Caco-2 (cell line): ENCODE measurements at regions of chr11 and their contacts with region 1.

Region 1: GRCh38 chr11:118051611-118052461 is 25.0 kb upstream of the TMPRSS4 start:
- DNase-seq: peak in 1 of 2 experiments; percentile 31
- H3K4me3 ChIP-seq: no peak overlapping the region
- H3K4me3 Mint-ChIP-seq: no peak overlapping the region
- H3K27ac Mint-ChIP-seq: no peak overlapping the region
- H3K4me1 ChIP-seq: no peaks in the 10 kb centered on the region
- H3K4me1 Mint-ChIP-seq: no peaks in the 10 kb centered on the region
- H3K27me3 ChIP-seq: no peaks in the 10 kb centered on the region
- H3K27me3 Mint-ChIP-seq: no peaks in the 10 kb centered on the region
- CTCF ChIP-seq: no peak

Region 2: GRCh38 chr11:117807482-117808327 is 244.1 kb before region 1 on chr11:
- CTCF ChIA-PET with region 1: interaction called, 15 read pairs
- POLR2A ChIA-PET with region 1: no interaction called
- intact Hi-C with region 1: no loop called
- DNase-seq: peak; percentile 76 to 85
- H3K4me3 ChIP-seq: no peak overlapping the region
- H3K4me3 Mint-ChIP-seq: no peak overlapping the region
- H3K27ac Mint-ChIP-seq: no peak overlapping the region
- H3K4me1 ChIP-seq: no peaks in the 10 kb centered on the region
- H3K4me1 Mint-ChIP-seq: no peaks in the 10 kb centered on the region
- H3K27me3 ChIP-seq: no peaks in the 10 kb centered on the region
- H3K27me3 Mint-ChIP-seq: peaks cover 15% of the 10 kb centered on the region
- CTCF ChIP-seq: peak; percentile 97 to 98

Region 3: DNA sequence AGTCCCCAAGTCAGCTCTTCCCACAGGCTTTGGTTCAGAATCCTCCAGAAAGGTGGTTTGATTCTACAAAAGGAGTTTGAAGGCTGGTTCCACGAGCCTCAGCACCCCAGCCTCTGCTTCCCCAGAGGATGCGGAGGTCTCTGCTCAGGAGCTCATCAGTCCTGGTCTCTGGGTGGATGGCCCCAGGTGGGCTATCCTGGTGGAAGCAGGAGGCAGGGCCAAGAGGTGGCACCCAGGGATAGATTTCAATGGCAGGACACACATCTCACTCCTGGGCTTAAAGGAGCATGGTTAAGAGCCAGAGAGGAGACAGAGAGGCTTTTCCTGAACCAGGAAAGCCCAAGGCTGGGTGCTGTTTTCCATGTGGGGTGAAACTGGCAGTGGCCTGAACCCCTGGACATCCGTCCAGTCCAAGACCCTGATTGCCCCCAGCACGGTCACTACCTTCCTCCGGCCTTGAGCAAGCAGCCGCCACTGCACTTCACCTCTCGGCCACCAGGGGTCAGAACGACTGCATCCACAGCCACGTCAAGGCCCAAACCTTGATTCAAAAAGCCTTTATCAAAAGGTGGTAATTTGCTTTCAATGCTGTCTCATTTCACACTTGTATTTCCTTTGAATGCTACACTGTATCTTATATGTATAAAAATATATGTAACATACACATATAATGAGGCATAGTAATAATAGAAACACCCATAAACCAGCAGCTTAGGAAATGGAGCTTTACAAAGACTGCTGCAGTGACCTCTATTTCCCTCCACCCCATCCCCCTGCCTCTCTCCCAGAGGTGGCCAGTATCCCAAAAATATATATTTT is 208.0 kb before region 1 on chr11:
- CTCF ChIA-PET with region 1: interaction called, 3 read pairs
- POLR2A ChIA-PET with region 1: no interaction called
- intact Hi-C with region 1: loop called (anchors 1 kb)
- DNase-seq: peak; percentile 81 to 89
- H3K4me3 ChIP-seq: no peak overlapping the region
- H3K4me3 Mint-ChIP-seq: no peak overlapping the region
- H3K27ac Mint-ChIP-seq: no peak overlapping the region
- H3K4me1 ChIP-seq: no peaks in the 10 kb centered on the region
- H3K4me1 Mint-ChIP-seq: no peaks in the 10 kb centered on the region
- H3K27me3 ChIP-seq: no peaks in the 10 kb centered on the region
- H3K27me3 Mint-ChIP-seq: peaks cover 2% of the 10 kb centered on the region
- CTCF ChIP-seq: peak; percentile 99 to 100

Region 4: DNA sequence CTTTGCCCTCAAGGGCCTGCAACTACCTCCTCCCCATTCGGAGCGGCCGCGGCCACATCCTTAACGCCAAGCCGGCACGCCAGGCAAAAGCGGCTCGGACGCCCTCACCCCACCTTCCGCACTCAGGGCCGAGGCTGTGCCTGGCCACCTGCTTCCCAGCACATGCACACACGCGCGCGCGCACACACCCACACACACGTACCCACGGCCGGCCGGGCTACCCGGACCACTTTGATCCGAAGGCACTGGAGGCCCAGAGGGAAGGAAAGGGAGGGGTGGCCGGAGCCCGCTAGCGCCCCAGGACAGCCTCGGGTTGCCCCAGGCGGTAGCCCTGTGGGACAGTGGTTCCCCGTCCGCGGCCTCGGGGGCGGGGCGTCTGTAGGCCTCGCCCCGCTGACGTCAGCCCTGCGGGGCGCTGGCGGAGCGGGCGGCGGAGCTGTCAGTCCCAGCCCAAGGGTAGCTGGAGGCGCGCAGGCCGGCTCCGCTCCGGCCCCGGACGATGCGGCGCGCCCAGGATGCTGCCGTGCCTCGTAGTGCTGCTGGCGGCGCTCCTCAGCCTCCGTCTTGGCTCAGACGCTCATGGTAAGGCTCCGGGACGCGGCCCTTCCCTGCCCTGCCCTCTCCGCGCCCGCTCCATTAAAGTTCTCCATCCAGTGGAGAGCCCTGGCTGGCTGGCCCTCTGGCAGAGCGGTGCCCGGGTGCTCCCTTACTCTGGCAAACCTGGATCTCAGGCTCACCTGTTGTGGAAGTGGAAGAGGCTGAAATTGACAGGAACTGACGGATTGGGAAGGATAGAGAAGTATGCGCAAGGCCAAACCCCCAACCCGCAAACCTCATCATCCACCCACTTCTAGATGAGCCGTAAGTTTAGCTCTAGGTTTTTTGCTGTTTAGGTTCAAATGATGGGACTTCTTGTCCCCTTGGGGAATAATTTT is 65.6 kb before region 1 on chr11 and contains the start of gene IL10RA:
- CTCF ChIA-PET with region 1: interaction called, 5 read pairs
- POLR2A ChIA-PET with region 1: no interaction called
- intact Hi-C with region 1: loop called (anchors 5 kb)
- DNase-seq: peak; percentile 87 to 95
- H3K4me3 ChIP-seq: peak within 1 kb of the TSS; percentile 74
- H3K4me3 Mint-ChIP-seq: peak within 1 kb of the TSS; percentile 60
- H3K27ac Mint-ChIP-seq: peak within 1 kb of the TSS; percentile 48
- H3K4me1 ChIP-seq: peaks cover 17% of the 10 kb centered on the region
- H3K4me1 Mint-ChIP-seq: peaks cover 19% of the 10 kb centered on the region
- H3K27me3 ChIP-seq: peaks cover 3% of the 10 kb centered on the region; the same call in 1 of the 2 replicates
- H3K27me3 Mint-ChIP-seq: peaks cover 18% of the 10 kb centered on the region
- CTCF ChIP-seq: no peak
- total RNA-seq, gene IL10RA: 0.65 and 1.6 TPM in 2 replicates

Region 5: GRCh38 chr11:118076754-118077281 is 25.0 kb after region 1 on chr11 and contains the start of gene TMPRSS4:
- CTCF ChIA-PET with region 1: interaction called, 10 read pairs
- POLR2A ChIA-PET with region 1: interaction called, 3 read pairs
- intact Hi-C with region 1: no loop called
- DNase-seq: peak; percentile 93 to 98
- H3K4me3 ChIP-seq: peak within 1 kb of the TSS; percentile 35
- H3K4me3 Mint-ChIP-seq: peak within 1 kb of the TSS; percentile 64
- H3K27ac Mint-ChIP-seq: peak within 1 kb of the TSS; percentile 98
- H3K4me1 ChIP-seq: peaks cover 33% of the 10 kb centered on the region
- H3K4me1 Mint-ChIP-seq: peaks cover 42% of the 10 kb centered on the region
- H3K27me3 ChIP-seq: no peaks in the 10 kb centered on the region
- H3K27me3 Mint-ChIP-seq: no peaks in the 10 kb centered on the region
- CTCF ChIP-seq: no peak
- total RNA-seq, gene TMPRSS4: 83.2 and 86.4 TPM in 2 replicates